IMR-90 (cell line): ENCODE measurements at regions of chr2 and their contacts with region 1.

Region 1: GRCh38 chr2:85504778-85505323 is 34.1 kb upstream of the MAT2A start:
- DNase-seq: peak; percentile 97
- ATAC-seq: peak; percentile 70
- H3K4me3 ChIP-seq: no peak overlapping the region
- H3K27ac ChIP-seq: peak overlapping the region; percentile 72
- H3K4me1 ChIP-seq: peaks cover 32% of the 10 kb centered on the region
- H3K27me3 ChIP-seq: no peaks in the 10 kb centered on the region
- CTCF ChIP-seq: no peak
- POLR2A ChIP-seq: no peak
- RAD21 ChIP-seq: no peak; the same call in 1 of the 2 replicates

Region 2: GRCh38 chr2:85230679-85231467 is 274.0 kb before region 1 on chr2:
- CTCF ChIA-PET with region 1: no interaction called
- POLR2A ChIA-PET with region 1: no interaction called
- dilution Hi-C with region 1: no loop called
- in situ Hi-C with region 1: no loop called
- intact Hi-C with region 1: no loop called
- DNase-seq: no peak
- ATAC-seq: no peak
- H3K4me3 ChIP-seq: no peak overlapping the region
- H3K27ac ChIP-seq: no peak overlapping the region
- H3K4me1 ChIP-seq: no peaks in the 10 kb centered on the region
- H3K27me3 ChIP-seq: no peaks in the 10 kb centered on the region
- CTCF ChIP-seq: no peak
- POLR2A ChIP-seq: no peak
- RAD21 ChIP-seq: no peak

Region 3: DNA sequence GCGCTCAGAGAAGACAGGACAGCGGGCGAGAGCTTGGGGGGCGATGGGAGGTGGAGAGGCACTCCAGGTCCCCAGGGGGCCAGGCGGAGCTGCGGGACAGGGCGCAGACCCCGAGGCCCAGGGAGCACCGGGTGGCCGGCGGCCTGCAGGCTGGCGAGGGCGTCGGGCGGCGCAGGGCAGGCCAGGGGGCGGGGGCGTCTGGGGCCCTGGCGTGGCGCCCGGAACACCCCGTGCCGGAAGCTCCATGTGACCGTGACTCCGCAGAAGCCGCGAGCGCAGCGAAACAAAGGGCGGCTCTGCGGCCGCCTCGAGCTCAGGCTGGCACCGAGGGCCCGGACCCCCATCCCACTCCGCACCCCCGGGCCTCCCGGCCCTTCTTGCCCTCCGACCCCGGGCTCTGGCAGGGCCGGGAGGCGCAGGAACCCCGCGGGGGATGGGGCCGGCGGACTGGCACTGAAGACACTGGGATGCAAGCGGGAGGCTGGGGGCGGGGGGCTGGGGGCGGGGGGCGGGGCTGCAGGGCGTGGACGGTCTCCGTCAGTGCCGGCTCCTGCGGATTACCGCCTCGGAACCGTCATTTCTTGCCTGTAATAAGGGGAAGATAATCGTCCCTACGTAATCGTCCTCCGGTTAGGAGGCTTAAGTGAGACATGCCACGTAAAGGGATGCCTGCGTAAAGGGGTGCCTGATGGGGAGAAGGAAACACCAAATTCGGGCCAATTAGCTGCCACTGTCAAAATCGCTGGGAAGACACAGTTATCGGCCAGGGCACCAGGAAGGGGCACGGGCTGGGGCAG is 67.2 kb before region 1 on chr2:
- CTCF ChIA-PET with region 1: no interaction called
- POLR2A ChIA-PET with region 1: no interaction called
- dilution Hi-C with region 1: no loop called
- in situ Hi-C with region 1: no loop called
- intact Hi-C with region 1: loop called (anchors 1 kb)
- DNase-seq: peak; percentile 77
- ATAC-seq: peak; percentile 63
- H3K4me3 ChIP-seq: peak overlapping the region; percentile 29; the same call in 1 of the 2 replicates
- H3K27ac ChIP-seq: peak overlapping the region; percentile 79
- H3K4me1 ChIP-seq: peaks cover 29% of the 10 kb centered on the region
- H3K27me3 ChIP-seq: no peaks in the 10 kb centered on the region
- CTCF ChIP-seq: no peak
- POLR2A ChIP-seq: peak; percentile 78
- RAD21 ChIP-seq: no peak

Region 4: DNA sequence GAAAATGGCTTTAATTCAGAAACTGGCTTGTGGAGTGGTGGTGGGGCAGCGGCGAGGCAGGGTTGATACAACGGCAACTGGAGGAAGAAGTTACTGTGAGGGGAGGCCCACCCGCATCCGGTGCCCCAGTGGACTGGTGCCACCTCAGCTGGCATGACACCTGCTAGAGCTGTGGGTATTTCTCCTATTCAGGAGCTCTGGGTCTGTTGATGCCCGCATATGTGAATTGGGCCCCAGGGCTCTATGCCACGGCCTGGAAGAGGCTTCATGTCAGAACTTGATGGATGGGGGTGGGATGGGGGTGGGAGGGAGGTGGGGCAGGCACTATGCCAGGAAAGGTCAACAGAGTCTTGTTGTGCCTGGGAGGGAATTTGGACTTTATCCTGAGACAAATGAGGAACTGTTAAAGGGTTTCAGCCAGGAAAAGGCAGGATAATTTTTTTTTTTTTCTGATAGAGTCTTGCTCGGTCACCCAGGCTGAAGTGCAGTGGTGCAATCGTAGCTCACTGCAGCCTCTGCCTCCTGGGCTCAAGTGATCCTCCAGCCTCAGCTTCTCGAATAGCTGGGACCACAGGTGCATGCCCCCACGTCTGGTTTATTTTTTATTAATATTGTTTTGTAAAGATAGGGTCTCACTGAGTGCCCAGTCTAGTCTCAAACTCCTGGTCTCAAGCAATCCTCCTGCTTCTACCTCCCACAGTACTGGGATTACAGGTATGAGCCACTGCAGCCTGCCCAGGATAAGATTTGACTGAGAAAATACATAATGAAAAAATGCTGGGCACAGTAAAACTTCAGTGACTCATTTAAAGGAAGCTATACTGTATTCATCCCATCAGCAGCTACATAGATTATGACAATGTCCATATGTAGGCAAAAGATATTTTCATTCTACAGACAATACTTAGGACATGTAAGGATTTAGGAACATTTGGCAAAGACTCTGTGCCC is 33.7 kb before region 1 on chr2:
- CTCF ChIA-PET with region 1: no interaction called
- POLR2A ChIA-PET with region 1: no interaction called
- dilution Hi-C with region 1: no loop called
- in situ Hi-C with region 1: no loop called
- intact Hi-C with region 1: no loop called
- DNase-seq: peak; percentile 42
- ATAC-seq: peak; percentile 46; the same call in 1 of the 2 replicates
- H3K4me3 ChIP-seq: no peak overlapping the region
- H3K27ac ChIP-seq: no peak overlapping the region
- H3K4me1 ChIP-seq: peaks cover 11% of the 10 kb centered on the region; the same call in 1 of the 2 replicates
- H3K27me3 ChIP-seq: no peaks in the 10 kb centered on the region
- CTCF ChIP-seq: no peak
- POLR2A ChIP-seq: no peak
- RAD21 ChIP-seq: no peak

Region 5: GRCh38 chr2:85935170-85935745 is 430.4 kb after region 1 on chr2:
- CTCF ChIA-PET with region 1: no interaction called
- POLR2A ChIA-PET with region 1: interaction called, 21 read pairs
- dilution Hi-C with region 1: no loop called
- in situ Hi-C with region 1: no loop called
- intact Hi-C with region 1: no loop called
- DNase-seq: no peak
- ATAC-seq: no peak
- H3K4me3 ChIP-seq: no peak overlapping the region
- H3K27ac ChIP-seq: no peak overlapping the region
- H3K4me1 ChIP-seq: peaks cover 3% of the 10 kb centered on the region; the same call in 1 of the 2 replicates
- H3K27me3 ChIP-seq: no peaks in the 10 kb centered on the region
- CTCF ChIP-seq: no peak
- POLR2A ChIP-seq: no peak
- RAD21 ChIP-seq: no peak